ENCODE measurements at regions of chr7 and their contacts with region 1.

Region 1: GRCh38 chr7:95545078-95545498 is 51.2 kb downstream of the PDK4 start:
- DNase-seq: peak in 2 of 10 donors; percentile 40 to 52

Region 2: GRCh38 chr7:95596198-95597063 is 51.3 kb after region 1 on chr7 and contains the start of gene PDK4:
- intact Hi-C with region 1: loop called (anchors 5 kb)
- DNase-seq: peak; percentile 79 to 99 (median 92)

Region 3: GRCh38 chr7:95684037-95684436 is 138.9 kb after region 1 on chr7:
- intact Hi-C with region 1: loop called (anchors 1 kb)
- DNase-seq: no peak